Heart right ventricle (tissue), 16 donors: ENCODE measurements at regions of chr12 and their contacts with region 1.

Region 1: GRCh38 chr12:26832822-26833742 is at the start of gene ITPR2:
- DNase-seq: peak; percentile 96
- ATAC-seq: peak; percentile 96 to 98 (median 97)
- H3K4me3 ChIP-seq: peak within 1 kb of the TSS; percentile 59 to 99 (median 88)
- H3K27ac ChIP-seq: peak within 1 kb of the TSS; percentile 89 to 98 (median 94)
- H3K4me1 ChIP-seq: peaks cover 0 to 39% (median 25%) of the 10 kb centered on the region in 9 donors
- H3K27me3 ChIP-seq: no peaks in the 10 kb centered on the region
- CTCF ChIP-seq: peak in 5 of 9 donors; percentile 27 to 65 (median 47)
- total RNA-seq, gene ITPR2: 9.1 to 18.9 (median 14.8) TPM

Region 2: GRCh38 chr12:26713885-26714383 is 119.1 kb before region 1 on chr12:
- intact Hi-C with region 1: loop called in 3 of 10 experiments (anchors 10 kb)
- DNase-seq: no peak
- ATAC-seq: no peak
- H3K4me3 ChIP-seq: no peak overlapping the region
- H3K27ac ChIP-seq: no peak overlapping the region
- H3K4me1 ChIP-seq: no peaks in the 10 kb centered on the region
- H3K27me3 ChIP-seq: no peaks in the 10 kb centered on the region
- CTCF ChIP-seq: no peak

Region 3: GRCh38 chr12:26723379-26724308 is 109.4 kb before region 1 on chr12:
- intact Hi-C with region 1: loop called in 3 of 10 experiments (anchors 10 kb)
- DNase-seq: no peak
- ATAC-seq: peak in 7 of 8 donors; percentile 79 to 95 (median 83)
- H3K4me3 ChIP-seq: no peak overlapping the region
- H3K27ac ChIP-seq: peak overlapping the region in 6 of 10 donors; percentile 15 to 65 (median 40)
- H3K4me1 ChIP-seq: peaks cover 0 to 48% (median 27%) of the 10 kb centered on the region in 9 donors
- H3K27me3 ChIP-seq: no peaks in the 10 kb centered on the region
- CTCF ChIP-seq: no peak

Region 4: GRCh38 chr12:26732005-26732908 is 100.8 kb before region 1 on chr12:
- intact Hi-C with region 1: loop called in 2 of 10 experiments (anchors 5 to 10 kb)
- DNase-seq: no peak
- ATAC-seq: peak in 1 of 8 donors; percentile 53
- H3K4me3 ChIP-seq: no peak overlapping the region
- H3K27ac ChIP-seq: peak overlapping the region in 1 of 10 donors; percentile 21
- H3K4me1 ChIP-seq: peaks cover 0 to 50% (median 19%) of the 10 kb centered on the region in 9 donors
- H3K27me3 ChIP-seq: no peaks in the 10 kb centered on the region
- CTCF ChIP-seq: no peak

Region 5: DNA sequence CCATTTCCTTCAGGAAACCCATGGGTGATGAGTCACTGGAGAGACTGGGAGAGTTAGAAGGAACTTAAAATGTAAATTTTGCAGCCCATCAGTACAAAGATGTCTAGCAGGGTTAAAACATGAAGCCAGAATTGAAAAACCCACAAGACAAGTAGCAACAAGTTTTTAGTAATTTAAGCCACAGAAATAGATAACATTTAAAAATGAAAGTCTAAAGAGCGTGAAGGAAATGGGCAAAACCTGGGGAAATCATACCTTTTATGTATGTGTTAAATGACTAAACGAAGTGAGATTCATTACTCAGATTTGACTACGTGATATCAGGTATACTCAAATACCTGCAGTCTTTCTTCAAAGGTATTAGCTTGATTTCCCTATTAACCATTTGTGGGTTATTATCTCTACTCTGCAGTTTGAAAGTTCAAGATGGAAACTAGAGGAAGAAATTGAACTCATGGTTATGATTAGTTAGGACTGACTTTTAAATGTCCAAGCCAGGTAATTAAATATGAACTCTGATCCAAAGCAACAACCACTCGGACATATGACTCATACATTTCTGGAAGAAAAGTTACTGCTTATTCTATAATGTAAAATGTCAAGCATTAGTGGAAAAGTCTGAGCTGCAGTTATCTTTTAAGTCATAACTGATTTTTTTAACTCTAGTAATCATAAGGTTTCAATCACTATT is 84.2 kb before region 1 on chr12:
- intact Hi-C with region 1: no loop called
- DNase-seq: no peak
- ATAC-seq: no peak
- H3K4me3 ChIP-seq: no peak overlapping the region
- H3K27ac ChIP-seq: no peak overlapping the region
- H3K4me1 ChIP-seq: peaks cover 0 to 48% (median 7%) of the 10 kb centered on the region in 9 donors
- H3K27me3 ChIP-seq: no peaks in the 10 kb centered on the region
- CTCF ChIP-seq: no peak

Region 6: DNA sequence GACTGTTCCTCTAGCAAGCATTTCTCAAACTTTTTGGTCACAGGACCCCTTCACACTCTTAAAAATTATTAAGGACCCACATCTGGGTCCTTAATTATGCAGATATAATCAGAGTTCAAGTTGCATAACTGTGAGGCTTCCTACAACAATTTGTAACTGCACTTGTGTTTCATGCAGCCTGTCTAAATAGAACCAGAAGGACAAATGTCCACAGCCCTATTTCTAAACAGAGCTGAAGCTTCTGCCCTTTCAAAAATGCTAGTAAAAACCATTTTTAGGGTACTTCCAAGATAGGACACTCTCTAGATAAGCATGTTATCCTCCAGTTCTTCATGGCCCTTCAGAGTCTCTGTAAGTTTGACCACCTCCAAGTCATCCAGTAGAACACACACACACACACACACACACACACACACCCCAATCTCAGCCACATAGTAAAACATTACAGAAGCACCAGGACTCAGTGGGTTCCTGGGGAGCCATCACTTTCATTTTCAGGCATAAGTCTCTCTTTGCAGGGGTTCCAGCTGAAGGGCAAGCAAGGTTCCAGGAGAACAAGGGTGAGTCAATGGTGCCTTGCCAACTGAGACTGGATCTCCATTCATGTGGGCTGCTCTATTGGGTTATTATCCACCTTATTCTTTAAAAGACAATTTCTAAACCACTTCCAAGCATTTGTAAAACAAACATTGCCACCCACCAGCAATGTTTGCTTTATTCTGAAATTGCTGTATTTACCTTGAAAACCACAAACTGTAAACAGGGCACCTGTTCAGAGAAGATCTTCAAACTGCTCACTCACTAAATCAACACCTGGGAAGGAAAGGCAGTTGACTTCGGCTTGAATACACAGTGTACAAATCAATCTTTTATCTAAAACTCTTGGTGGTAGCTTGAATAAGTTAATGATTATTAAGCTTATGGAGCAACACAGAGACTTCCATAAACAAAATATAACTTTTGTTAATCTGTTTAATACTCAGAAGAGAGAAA is 64.2 kb before region 1 on chr12:
- intact Hi-C with region 1: no loop called
- DNase-seq: no peak
- ATAC-seq: no peak
- H3K4me3 ChIP-seq: no peak overlapping the region
- H3K27ac ChIP-seq: no peak overlapping the region
- H3K4me1 ChIP-seq: peaks cover 0 to 28% (median 6%) of the 10 kb centered on the region in 9 donors
- H3K27me3 ChIP-seq: no peaks in the 10 kb centered on the region
- CTCF ChIP-seq: no peak

Region 7: DNA sequence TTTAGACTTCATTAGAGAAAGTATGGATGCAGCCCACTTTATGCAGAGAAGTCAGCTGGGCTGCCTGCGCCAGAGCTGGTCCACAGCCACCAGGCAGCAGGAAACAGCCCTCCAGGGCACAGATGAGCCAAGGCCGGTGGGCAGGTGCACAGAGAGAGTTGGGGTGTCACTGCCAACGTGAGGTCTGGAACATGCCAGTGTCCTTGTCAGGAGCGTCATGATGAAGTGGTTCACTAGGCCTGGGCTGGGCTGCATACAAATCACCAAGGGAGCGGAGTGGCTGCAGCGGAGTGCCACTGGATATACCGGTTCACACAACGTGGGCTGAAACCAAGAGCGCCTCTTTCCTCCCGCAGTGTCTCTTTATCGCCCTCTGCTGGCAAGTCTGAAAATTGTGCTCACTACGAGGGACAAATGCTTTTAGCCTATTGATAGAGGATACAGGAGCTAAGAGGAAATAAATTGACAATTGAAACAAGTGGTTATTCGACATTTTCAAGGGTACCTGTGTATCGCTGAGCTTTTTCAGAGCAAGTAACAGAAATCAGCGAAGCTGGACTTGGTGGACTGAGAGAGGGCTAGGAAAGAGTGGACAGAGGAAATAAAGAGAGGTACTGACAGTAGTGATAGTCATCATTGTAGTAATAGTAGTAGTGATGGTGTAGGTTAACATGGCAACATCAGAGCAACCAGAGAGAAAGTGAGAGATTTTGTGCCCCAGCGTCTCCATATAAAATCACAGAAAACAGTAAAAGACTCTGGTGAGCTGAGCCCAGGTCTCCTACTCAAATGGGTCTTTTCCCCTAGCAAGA is 51.9 kb after region 1 on chr12:
- intact Hi-C with region 1: loop called in 2 of 10 experiments (anchors 10 kb)
- DNase-seq: peak; percentile 57 to 88
- ATAC-seq: peak; percentile 79 to 95 (median 94)
- H3K4me3 ChIP-seq: peak overlapping the region in 1 of 10 donors; percentile 6
- H3K27ac ChIP-seq: no peak overlapping the region
- H3K4me1 ChIP-seq: peaks cover 0 to 10% (median 4%) of the 10 kb centered on the region in 9 donors
- H3K27me3 ChIP-seq: no peaks in the 10 kb centered on the region
- CTCF ChIP-seq: peak; percentile 89 to 99 (median 97)

Region 8: DNA sequence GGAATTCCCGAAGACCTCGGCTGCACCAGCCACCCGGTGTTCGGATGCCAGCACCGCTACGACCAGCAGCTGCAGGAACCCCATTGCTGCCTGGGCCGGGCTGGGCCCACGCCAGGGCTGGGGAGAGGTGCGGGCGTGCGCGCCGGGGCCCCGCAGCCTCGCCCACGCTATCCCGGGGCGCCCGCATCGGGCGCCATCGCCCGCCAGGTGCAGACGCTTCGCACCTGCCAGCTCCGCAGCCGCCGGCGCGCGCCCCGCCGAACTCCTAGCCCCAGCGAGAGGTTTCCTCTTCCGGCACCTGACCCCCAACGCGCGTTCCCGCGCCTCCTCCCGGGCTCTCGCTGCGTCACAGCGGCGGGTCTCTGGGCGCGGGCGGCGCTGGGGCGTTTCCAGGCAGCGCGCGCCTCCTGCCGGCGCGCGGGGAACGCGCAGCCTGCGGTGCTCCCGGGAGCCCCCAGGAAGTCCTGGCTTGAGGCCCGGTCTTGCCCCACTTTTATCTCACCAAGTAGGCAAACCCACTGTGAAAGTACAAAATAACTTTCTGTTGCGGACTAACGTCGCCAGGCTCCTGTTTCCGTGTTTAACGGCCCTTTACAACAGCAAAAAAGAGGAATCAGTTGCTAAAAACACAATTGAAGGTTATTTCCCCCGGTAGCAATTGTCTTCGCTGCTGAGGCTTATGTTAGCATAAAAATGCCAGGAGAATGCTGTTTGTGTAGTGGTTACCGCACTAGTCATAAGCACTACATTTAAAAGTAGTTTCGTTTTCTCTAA is 181.2 kb after region 1 on chr12 and contains the start of gene TM7SF3:
- intact Hi-C with region 1: loop called in 1 of 10 experiments (anchors 10 kb)
- DNase-seq: peak; percentile 94
- ATAC-seq: peak; percentile 93 to 99 (median 96)
- H3K4me3 ChIP-seq: peak within 1 kb of the TSS; percentile 60 to 98 (median 79)
- H3K27ac ChIP-seq: peak within 1 kb of the TSS; percentile 73 to 95 (median 92)
- H3K4me1 ChIP-seq: peaks cover 0 to 54% (median 39%) of the 10 kb centered on the region in 9 donors
- H3K27me3 ChIP-seq: no peaks in the 10 kb centered on the region
- CTCF ChIP-seq: peak; percentile 92 to 99 (median 98)
- total RNA-seq, gene TM7SF3: 16.3 to 29.3 (median 23.7) TPM